ENCODE measurements at regions of chr17 and their contacts with region 1.

Region 1: DNA sequence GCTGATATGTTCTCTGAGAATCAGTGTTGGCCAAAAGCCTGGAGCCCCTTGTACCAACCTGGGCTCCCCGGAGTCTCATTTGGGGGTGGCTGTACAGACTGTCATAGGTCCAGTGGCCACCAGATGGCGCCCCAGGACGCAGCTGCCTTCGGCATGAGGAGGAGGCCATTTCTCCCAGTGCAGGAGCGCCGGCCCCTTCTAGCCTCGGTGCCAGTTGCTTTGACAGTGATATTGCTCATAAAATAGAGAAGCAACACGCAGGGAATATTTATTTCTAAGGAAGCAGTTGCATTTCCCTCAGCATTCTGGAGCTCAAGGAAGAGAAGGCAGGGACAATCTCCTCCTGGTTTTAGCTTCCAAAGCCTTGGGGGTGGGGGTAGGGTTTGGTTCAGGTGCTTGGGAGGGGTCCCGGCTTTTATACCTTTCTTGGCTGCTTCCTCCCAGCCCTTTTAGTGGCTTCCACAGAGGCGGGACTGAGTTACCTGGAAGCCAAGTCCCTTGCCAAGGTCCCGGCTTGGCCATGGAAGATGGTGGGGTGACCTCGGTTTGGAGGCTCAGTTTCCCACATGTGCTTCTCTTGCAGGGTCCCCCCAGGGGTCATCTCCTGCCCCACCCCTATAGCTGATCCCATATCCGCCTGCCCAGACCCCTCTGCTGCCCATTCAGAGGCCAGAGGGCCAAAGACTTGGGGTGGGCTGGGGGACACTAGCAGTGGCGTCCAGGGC is 117.8 kb upstream of the CDC42EP4 start:
- DNase-seq: peak; percentile 94
- ATAC-seq: peak; percentile 99
- H3K4me3 Mint-ChIP-seq: no peak overlapping the region
- H3K27ac Mint-ChIP-seq: no peak overlapping the region
- H3K4me1 Mint-ChIP-seq: peaks cover 2% of the 10 kb centered on the region
- H3K27me3 Mint-ChIP-seq: no peaks in the 10 kb centered on the region

Region 2: DNA sequence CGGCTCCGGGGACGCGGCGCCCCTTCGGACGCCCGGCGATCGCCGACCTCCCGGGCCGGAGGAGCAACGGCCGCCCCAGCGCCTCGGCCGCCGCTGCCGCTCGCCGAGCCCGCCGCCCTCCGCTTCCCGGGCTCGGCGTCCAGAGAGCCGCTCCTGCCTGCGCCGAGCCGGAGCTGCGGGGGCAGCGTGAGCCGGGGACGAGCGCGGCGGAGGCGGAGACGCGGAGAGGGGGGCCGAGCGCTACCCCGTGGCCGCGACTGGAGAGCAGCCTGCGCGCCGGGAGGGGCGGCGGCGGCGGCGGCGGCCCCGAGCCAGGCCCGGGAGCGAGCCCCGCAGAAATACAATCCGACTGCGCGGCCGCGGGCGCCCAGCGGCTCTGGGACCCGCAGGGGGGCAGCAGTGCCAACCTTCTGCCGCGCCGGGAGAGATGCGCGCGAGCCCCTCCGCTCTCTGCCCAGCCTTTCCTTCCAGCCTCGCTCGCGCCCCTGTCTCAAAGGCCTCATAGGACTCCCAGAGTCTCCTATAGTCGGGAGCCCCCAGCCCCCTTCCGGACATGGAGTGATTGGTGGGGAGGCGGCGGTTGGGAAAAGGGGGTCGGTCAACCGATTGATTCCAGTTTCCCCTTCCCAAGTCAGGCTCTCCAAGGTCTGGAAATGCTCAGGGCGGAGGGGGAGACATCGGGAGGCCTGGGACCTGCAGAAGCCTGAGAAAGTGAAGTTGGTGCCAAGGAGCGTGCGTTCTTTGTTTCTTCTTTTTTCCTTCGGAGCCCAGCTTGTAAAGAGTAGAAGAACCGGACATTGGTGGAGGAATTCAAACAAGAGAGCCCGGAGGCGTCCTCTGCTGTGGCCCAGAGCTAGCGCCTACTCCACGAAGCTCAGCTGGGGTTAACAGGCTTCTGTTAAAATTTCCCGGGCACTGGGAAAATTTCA is 215.7 kb after region 1 on chr17:
- CTCF ChIA-PET with region 1: interaction called, 4 read pairs
- POLR2A ChIA-PET with region 1: no interaction called
- intact Hi-C with region 1: loop called (anchors 1 to 10 kb)
- DNase-seq: peak; percentile 66
- ATAC-seq: peak; percentile 54
- H3K4me3 Mint-ChIP-seq: peak overlapping the region; percentile 32
- H3K27ac Mint-ChIP-seq: no peak overlapping the region
- H3K4me1 Mint-ChIP-seq: peaks cover 14% of the 10 kb centered on the region
- H3K27me3 Mint-ChIP-seq: peaks cover 12% of the 10 kb centered on the region

Region 3: DNA sequence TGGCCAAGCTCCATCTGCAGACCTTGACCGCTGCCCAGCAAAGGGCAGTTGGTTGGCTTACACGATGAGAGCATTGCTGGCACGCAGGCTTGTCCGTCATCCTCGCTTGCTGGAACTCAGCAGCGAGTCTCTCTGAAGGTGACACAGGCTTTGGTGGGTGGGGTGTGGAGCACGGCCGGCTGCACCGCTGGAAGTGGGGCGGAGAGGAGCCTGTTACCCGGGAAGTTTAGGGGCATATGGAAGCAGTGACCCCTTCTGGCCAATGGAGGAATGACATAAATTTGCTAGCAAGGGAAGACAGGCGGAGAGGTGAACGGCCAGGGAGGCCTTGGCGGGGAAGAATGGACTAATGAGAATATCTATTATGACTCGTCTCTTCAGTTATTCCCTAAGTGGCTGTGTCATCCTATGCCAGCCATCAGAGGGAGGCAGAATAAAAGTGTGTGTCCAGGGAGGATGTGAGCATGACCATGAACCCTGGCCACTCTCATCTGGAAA is 280.5 kb after region 1 on chr17:
- CTCF ChIA-PET with region 1: interaction called, 49 read pairs
- POLR2A ChIA-PET with region 1: no interaction called
- intact Hi-C with region 1: loop called (anchors 1 kb)
- DNase-seq: peak; percentile 79
- ATAC-seq: peak; percentile 63
- H3K4me3 Mint-ChIP-seq: no peak overlapping the region
- H3K27ac Mint-ChIP-seq: no peak overlapping the region
- H3K4me1 Mint-ChIP-seq: peaks cover 9% of the 10 kb centered on the region
- H3K27me3 Mint-ChIP-seq: no peaks in the 10 kb centered on the region

Region 4: DNA sequence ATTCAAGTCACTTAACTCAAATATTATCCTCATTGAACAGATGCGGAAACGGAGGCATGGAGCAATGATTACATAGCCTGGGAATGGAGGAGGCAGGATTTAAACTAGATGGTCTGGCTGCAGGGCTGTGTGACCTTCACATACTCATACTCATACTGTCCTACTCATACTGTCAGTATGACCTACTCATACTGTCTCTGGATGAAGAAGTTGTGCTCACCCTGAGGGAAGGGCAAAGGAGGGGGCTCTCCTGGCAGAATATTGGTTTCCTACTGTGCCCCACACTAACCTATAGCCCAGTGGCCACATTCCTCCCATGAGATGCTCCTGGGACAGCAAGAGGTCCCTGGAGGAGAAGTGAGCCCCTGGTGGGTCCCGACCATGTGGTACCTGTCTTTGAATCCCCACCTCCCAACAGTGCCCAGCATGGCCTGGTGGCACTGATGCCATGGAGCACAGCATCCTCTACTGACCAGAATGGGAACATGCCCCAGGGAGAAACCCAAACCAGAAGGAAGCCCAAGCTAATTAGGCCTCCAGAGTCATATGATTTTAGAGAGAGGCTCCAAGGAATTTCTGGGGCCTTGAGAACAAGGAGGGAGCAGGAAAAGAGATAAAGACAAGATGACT is 411.9 kb after region 1 on chr17:
- CTCF ChIA-PET with region 1: interaction called, 3 read pairs
- POLR2A ChIA-PET with region 1: no interaction called
- intact Hi-C with region 1: loop called in 1 of 2 experiments (anchors 1 kb)
- DNase-seq: peak; percentile 28
- ATAC-seq: peak; percentile 51
- H3K4me3 Mint-ChIP-seq: no peak overlapping the region
- H3K27ac Mint-ChIP-seq: no peak overlapping the region
- H3K4me1 Mint-ChIP-seq: peaks cover 5% of the 10 kb centered on the region
- H3K27me3 Mint-ChIP-seq: no peaks in the 10 kb centered on the region

Region 5: GRCh38 chr17:73956669-73957465 is 527.3 kb after region 1 on chr17:
- CTCF ChIA-PET with region 1: interaction called, 12 read pairs
- POLR2A ChIA-PET with region 1: no interaction called
- intact Hi-C with region 1: loop called (anchors 1 kb)
- DNase-seq: peak; percentile 78
- ATAC-seq: peak; percentile 72
- H3K4me3 Mint-ChIP-seq: no peak overlapping the region
- H3K27ac Mint-ChIP-seq: no peak overlapping the region
- H3K4me1 Mint-ChIP-seq: no peaks in the 10 kb centered on the region
- H3K27me3 Mint-ChIP-seq: peaks cover 3% of the 10 kb centered on the region

Region 6: GRCh38 chr17:73998653-73999645 is 569.3 kb after region 1 on chr17:
- CTCF ChIA-PET with region 1: interaction called, 4 read pairs
- POLR2A ChIA-PET with region 1: no interaction called
- intact Hi-C with region 1: loop called in 1 of 2 experiments (anchors 1 kb)
- DNase-seq: peak; percentile 82
- ATAC-seq: peak; percentile 96
- H3K4me3 Mint-ChIP-seq: no peak overlapping the region
- H3K27ac Mint-ChIP-seq: no peak overlapping the region
- H3K4me1 Mint-ChIP-seq: no peaks in the 10 kb centered on the region
- H3K27me3 Mint-ChIP-seq: peaks cover 8% of the 10 kb centered on the region

Region 7: GRCh38 chr17:74176546-74177001 is 747.0 kb after region 1 on chr17:
- CTCF ChIA-PET with region 1: no interaction called
- POLR2A ChIA-PET with region 1: no interaction called
- intact Hi-C with region 1: loop called (anchors 1 kb)
- DNase-seq: peak; percentile 72
- ATAC-seq: peak; percentile 80
- H3K4me3 Mint-ChIP-seq: no peak overlapping the region
- H3K27ac Mint-ChIP-seq: no peak overlapping the region
- H3K4me1 Mint-ChIP-seq: no peaks in the 10 kb centered on the region
- H3K27me3 Mint-ChIP-seq: peaks cover 9% of the 10 kb centered on the region

Measured in activated CD4-positive, alpha-beta T cell treated with anti-CD3 and anti-CD28 coated beads for 36 hours (primary cell).